Sigmoid colon (tissue), 7 donors: ENCODE measurements at regions of chr10 and their contacts with region 1.

Region 1: DNA sequence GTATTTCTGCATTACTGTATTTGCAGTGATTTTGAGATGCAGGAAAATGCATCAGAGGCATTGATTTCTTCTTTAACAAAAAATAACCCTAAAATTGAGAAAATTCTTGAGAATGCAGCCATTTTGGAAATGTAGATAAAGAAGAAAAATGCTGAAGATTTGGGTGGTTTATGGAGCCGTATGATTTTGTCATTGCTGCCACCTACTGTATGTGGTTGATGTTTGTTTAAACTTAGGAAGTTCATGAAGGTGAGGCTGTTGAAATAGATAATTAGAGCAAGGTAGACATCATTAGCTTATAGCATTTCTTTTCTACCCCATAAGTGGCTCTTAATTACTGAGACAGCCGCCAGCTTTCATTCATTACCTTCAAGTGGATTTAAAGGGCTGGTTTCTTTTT is 92.1 kb upstream of the SAMD8 start:
- DNase-seq: no peak
- H3K4me3 ChIP-seq: no peak overlapping the region
- H3K27ac ChIP-seq: no peak overlapping the region
- H3K4me1 ChIP-seq: peaks cover 0 to 20% (median 14%) of the 10 kb centered on the region in 4 donors
- H3K27me3 ChIP-seq: no peaks in the 10 kb centered on the region
- CTCF ChIP-seq: peak in 2 of 4 experiments; percentile 19 to 20
- EP300 ChIP-seq: no peak
- POLR2A ChIP-seq: no peak

Region 2: DNA sequence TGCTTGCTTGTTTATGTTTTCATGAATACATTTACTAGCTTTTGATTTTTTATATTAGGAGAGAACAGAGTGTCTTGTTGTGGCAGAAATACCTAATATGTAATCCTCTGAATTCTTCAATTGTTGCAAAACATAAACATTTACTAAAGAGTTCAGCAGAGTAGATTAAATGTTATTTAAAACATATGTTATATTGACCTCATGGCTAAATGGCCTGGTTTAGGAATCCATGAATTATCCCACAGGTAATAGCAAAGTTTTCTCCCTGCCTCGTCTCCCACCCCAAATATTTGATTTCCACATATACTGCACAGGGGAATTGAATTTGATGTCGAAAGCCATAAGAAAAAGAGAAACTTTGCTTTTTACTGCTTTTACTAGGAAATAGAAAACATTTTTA is 756.5 kb before region 1 on chr10:
- intact Hi-C with region 1: loop called (anchors 2 kb)
- DNase-seq: no peak
- H3K4me3 ChIP-seq: no peak overlapping the region
- H3K27ac ChIP-seq: no peak overlapping the region
- H3K4me1 ChIP-seq: peaks cover 0 to 5% (median 2%) of the 10 kb centered on the region in 4 donors
- H3K27me3 ChIP-seq: no peaks in the 10 kb centered on the region
- CTCF ChIP-seq: no peak
- EP300 ChIP-seq: no peak
- POLR2A ChIP-seq: no peak

Region 3: GRCh38 chr10:74750848-74751274 is 268.5 kb before region 1 on chr10:
- intact Hi-C with region 1: no loop called
- DNase-seq: no peak
- H3K4me3 ChIP-seq: no peak overlapping the region
- H3K27ac ChIP-seq: no peak overlapping the region
- H3K4me1 ChIP-seq: peaks cover 0 to 24% (median 17%) of the 10 kb centered on the region in 4 donors
- H3K27me3 ChIP-seq: no peaks in the 10 kb centered on the region
- CTCF ChIP-seq: no peak
- EP300 ChIP-seq: no peak
- POLR2A ChIP-seq: no peak

Region 4: DNA sequence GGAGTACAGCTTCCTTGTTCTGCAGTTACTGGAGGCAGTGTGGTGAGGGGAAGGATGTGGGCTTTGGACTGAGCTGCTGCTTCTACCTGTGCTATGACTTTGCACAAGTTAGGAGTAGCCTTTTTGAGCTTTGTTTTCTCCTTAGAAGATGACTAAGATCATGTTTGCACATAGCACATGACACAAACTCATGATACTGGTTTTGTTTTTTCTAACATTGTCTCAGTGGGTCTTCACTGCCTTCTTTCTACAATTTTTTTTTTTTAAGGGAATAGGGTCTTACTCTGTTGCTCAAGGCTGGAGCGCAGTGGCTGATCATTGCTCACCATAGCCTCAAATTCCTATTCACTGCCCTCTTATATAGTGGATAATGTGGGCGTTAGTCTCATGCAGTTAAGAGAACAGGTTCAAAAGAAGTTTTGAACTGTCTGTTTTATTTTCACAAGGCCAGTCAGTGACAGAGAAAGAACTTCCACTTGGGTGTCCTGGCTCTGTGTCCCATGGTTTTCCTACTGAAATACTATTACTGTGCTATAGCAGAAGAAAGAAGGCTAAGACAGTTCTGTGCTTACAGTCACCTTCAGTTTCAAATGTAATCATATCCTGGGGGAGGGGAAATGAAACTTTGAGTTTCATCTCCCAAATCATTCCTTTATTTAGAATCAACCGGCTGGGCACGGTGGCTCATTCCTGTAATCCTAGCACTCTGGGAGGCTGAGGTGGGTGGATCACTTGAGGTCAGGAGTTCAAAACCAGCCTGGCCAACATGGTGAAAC is 121.0 kb before region 1 on chr10:
- intact Hi-C with region 1: no loop called
- DNase-seq: no peak
- H3K4me3 ChIP-seq: no peak overlapping the region
- H3K27ac ChIP-seq: peak overlapping the region in 1 of 4 donors; percentile 11
- H3K4me1 ChIP-seq: peaks cover 0 to 42% (median 22%) of the 10 kb centered on the region in 4 donors
- H3K27me3 ChIP-seq: no peaks in the 10 kb centered on the region
- CTCF ChIP-seq: no peak
- EP300 ChIP-seq: no peak
- POLR2A ChIP-seq: no peak